Gastrocnemius medialis (tissue), 4 donors: ENCODE measurements at regions of chrX and their contacts with region 1.

Region 1: GRCh38 chrX:119067023-119067739 is 5.6 kb upstream of the CT47C1 start:
- DNase-seq: peak in 1 of 2 donors; percentile 22
- ATAC-seq: peak in 1 of 2 donors; percentile 58
- H3K4me3 ChIP-seq: no peak overlapping the region
- H3K27ac ChIP-seq: no peak overlapping the region
- H3K4me1 ChIP-seq: no peaks in the 10 kb centered on the region
- H3K27me3 ChIP-seq: no peaks in the 10 kb centered on the region
- CTCF ChIP-seq: peak; percentile 39 to 67 (median 57)
- POLR2A ChIP-seq: no peak

Region 2: DNA sequence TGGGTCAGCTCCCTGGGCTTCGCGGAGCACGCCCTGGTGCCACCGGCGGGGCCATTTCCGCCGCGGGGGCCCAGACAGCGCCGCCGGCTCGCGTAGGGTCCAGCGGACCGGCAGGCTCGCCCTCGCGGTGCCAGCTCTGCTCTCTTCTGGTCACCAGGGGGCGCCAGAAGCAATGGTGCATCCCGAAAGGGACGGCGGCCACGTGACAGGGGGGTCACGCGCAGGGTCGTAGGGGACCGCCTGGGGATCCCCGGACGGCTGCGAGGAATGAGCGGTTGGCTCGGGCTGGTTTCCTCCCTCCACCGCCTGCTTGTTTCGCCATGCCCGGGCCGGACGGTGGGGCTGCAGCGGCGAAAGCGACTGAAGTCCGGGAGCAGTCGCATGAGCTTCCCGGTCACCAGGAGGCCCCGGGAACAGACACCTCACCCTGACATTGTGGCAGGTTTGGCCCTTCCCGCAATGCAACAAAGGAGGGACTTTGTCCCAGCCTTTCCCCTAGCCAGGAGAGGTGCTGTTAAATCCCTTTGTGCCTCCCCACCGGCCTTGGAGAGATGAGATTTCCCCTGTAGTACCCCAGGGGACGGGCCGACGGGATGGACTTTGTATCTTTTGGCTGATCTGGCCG is 227.7 kb before region 1 on chrX:
- in situ Hi-C with region 1: loop called in 2 of 4 experiments (anchors 10 kb)
- intact Hi-C with region 1: loop called (anchors 2 kb)
- DNase-seq: peak; percentile 55 to 77
- ATAC-seq: peak; percentile 83 to 98
- H3K4me3 ChIP-seq: peak overlapping the region; percentile 57 to 65 (median 63)
- H3K27ac ChIP-seq: peak overlapping the region; percentile 49 to 71 (median 60)
- H3K4me1 ChIP-seq: no peaks in the 10 kb centered on the region
- H3K27me3 ChIP-seq: no peaks in the 10 kb centered on the region
- CTCF ChIP-seq: peak; percentile 57 to 87 (median 77)
- POLR2A ChIP-seq: no peak

Region 3: GRCh38 chrX:118847676-118848075 is 219.5 kb before region 1 on chrX:
- in situ Hi-C with region 1: loop called (anchors 5 to 10 kb)
- intact Hi-C with region 1: loop called (anchors 2 kb)
- DNase-seq: no peak
- ATAC-seq: peak; percentile 73 to 89
- H3K4me3 ChIP-seq: no peak overlapping the region
- H3K27ac ChIP-seq: no peak overlapping the region
- H3K4me1 ChIP-seq: no peaks in the 10 kb centered on the region
- H3K27me3 ChIP-seq: no peaks in the 10 kb centered on the region
- CTCF ChIP-seq: peak in 4 of 5 experiments; percentile 33 to 68 (median 60)
- POLR2A ChIP-seq: no peak

Region 4: GRCh38 chrX:119093991-119094737 is 27.0 kb after region 1 on chrX:
- in situ Hi-C with region 1: no loop called
- intact Hi-C with region 1: no loop called
- DNase-seq: no peak
- ATAC-seq: no peak
- H3K4me3 ChIP-seq: no peak overlapping the region
- H3K27ac ChIP-seq: no peak overlapping the region
- H3K4me1 ChIP-seq: no peaks in the 10 kb centered on the region
- H3K27me3 ChIP-seq: no peaks in the 10 kb centered on the region
- CTCF ChIP-seq: no peak
- POLR2A ChIP-seq: no peak